ENCODE measurements at regions of chr2 and their contacts with region 1.

Region 1: DNA sequence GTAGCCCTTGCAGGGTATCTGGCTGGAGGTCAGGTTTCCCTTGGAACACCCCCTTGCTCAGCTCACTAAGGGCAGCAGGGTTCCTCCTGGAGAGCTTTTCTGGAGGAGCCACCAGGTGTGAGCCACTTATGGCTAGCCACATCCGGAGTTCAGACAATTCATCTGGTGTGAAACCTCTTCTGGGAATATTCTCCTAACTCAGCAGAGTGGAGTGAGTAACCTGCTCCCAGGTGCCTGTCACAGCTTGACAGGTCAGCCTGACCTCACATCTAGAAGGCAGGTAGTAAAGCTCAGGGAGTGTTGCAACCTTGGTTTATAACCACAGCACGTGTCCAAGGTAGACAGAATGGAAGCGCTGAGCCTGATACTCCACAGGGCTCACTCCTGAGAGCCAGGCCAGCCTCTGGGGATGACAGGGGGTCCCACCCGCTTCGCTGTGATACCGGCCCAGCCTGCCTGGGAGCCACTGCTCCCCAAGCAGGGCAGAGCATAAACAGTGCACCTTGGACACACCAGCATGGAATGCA is 62.6 kb upstream of the TGFA start:
- DNase-seq: no peak

Region 2: DNA sequence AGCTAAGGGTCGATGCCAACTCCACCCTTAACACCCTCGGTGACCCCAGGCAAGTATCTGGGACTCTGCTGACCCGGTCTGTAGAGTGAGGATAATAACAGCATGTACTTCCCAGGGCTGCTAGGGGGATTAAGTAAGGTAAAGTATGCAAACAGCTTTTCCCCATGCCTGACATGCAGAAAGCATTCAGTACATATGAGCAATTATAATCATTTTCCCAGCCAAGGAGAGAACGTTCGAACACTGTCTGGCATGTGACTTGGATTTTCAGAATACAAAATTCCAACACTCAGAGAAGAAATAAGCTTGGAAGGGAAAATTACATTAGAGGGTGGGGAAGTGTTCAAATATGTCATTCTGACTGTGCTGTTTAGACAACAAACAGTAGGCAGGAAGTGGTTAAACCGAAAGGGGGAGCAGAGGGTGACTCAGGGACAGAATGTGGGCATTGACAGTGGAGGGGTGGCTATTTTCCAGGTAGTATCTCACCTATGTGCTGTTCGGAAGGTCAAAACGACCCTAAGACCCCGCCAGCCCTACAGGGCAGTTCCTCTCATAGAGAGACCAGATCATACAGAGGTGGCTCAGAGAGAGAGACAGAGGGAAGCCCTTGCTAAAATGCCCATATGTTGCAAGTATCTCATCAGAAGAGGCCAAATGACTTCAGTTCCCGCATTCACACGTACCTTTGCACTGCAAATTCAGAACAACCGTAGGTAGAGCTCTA is 669.7 kb before region 1 on chr2:
- intact Hi-C with region 1: no loop called
- DNase-seq: no peak

Region 3: GRCh38 chr2:70301344-70302194 is 314.7 kb before region 1 on chr2 and contains the start of gene FAM136A:
- intact Hi-C with region 1: loop called in 1 of 2 experiments (anchors 10 kb)
- DNase-seq: peak; percentile 96
- total RNA-seq, gene FAM136A: 19.2 to 24.7 TPM

Region 4: DNA sequence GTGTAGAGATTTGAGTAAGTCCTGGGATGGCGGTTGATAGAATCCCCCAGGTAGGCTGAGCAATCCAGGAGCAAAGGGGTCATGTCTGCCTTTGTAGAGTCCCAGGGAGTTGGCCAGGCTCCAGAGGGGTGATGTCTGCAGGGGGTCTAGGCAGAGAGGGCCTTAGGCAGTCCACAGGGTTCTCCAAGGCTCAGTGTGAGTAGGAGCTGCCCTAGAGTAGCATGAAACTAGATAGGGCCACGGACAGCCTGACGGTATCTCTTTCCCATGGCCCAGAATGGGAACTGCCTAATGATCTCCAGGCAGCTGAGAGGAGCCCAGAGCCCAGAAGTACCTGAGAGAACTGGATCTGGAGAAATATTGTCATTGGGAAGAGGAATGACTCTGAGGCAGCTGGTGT is 305.3 kb before region 1 on chr2:
- intact Hi-C with region 1: loop called (anchors 10 kb)
- DNase-seq: no peak

Region 5: GRCh38 chr2:70340921-70341765 is 275.1 kb before region 1 on chr2:
- intact Hi-C with region 1: loop called in 1 of 2 experiments (anchors 10 kb)
- DNase-seq: no peak